ENCODE measurements at regions of chr17 and their contacts with region 1.

Region 1: DNA sequence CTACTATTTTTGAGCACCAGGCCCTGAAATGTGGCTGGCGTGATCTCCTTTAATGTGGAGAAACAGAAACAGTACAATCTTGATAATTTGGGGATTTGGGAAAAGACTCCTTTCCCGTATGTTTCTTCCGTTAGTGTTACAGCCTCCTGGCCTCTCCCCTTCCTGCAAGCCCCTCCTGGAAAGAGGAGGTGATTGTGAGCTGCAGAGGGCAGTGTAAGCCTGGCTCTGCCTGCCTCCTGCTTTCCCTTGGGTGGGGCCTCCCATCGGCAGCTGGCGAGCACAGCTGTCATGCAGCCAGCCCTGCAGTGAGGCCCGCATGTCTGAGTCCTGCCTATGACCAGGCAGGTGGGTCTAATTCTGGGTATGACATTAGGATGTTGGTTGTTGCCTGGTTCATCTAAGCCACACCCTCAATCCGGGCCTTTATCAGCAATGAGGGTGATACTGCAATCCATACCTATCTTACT is 48.7 kb upstream of the WSB1 start:
- DNase-seq: peak; percentile 81
- CTCF ChIP-seq: peak; percentile 75

Region 2: GRCh38 chr17:27332485-27333409 is 87.5 kb after region 1 on chr17:
- in situ Hi-C with region 1: loop called (anchors 10 kb)
- DNase-seq: peak; percentile 93
- CTCF ChIP-seq: peak; percentile 88